ENCODE measurements at regions of chr4 and their contacts with region 1.

Region 1: GRCh38 chr4:157045507-157046127 is 30.3 kb upstream of the GLRB start:
- DNase-seq: no peak
- ATAC-seq: peak; percentile 79

Region 2: DNA sequence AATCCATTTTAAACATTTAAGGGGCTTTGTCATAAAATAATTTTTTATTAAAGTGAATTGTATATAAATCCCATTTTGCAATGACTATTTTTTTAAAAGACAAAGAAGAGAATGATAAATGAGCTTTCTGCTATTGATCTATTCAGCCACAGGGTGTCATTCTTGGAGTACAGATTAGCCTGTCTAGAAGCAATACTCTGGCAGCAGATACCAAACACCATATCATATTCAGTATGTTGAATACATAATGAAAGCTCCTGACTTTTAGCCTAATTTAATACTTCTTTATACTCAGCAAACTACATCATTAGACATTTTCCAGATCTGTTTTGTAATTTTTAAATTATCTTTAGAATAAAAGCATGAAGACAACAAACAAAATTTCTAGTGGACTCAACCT is 570.3 kb before region 1 on chr4:
- intact Hi-C with region 1: loop called in 1 of 2 experiments (anchors 10 kb)
- DNase-seq: no peak
- ATAC-seq: peak; percentile 64

Region 3: DNA sequence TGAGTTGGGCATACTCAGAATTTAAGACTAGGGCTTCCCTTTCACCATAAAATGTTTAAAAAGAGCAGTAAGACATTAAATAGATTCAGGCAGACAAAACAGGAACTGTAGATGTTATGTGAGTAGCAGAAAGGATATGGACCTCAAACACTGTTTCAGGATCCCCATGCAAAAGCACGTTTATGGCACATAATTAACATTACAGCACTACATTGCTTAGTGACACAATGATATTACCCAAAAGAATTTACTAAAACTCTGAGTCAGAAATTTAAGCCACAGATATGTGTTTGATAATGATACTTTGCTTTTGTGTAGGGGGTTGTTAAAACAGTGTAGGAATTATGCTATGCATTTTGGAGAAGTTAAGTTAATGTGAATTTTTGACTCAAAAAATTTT is 340.3 kb before region 1 on chr4:
- intact Hi-C with region 1: no loop called
- DNase-seq: no peak
- ATAC-seq: no peak

Measured in left colon (tissue), 2 donors.